ENCODE measurements at regions of chr19 and their contacts with region 1.

Region 1: DNA sequence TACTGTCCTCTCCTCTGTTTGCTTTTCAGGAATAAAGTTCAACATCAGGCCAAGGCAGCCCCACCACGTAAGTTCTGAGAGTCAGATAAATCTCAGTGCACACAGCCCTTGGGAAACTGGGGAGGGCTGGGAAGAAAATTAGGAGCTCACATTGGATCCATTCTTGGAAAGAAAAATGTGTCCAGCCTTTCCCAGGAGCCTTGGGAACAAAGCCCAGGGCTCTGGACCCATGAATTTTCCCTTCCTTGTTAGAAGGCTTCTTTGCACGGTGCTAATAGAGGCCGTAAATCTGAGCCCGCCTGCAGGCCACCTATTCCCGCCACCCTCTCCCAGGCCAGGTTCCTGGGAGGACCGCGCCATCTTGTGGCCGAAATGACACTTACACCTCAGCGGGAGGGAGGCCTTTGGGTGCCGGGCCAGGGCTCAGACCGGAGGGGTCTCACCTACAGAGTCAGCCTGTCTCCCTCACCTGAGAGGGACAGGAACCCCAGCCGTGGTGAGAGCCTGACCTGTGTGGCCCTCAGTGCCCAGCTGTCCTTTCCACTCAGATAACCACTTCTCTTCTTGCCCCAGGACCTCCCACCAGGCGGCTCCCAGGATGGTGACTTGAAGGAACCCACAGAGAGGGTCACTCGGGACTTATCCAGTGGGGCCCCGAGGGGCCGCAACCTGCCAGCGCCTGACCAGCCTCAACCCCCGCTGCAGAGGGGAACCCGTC is 25.1 kb upstream of the KCTD15 start:
- DNase-seq: no peak
- H3K4me3 ChIP-seq: no peak overlapping the region
- CTCF ChIP-seq: peak; percentile 91

Region 2: DNA sequence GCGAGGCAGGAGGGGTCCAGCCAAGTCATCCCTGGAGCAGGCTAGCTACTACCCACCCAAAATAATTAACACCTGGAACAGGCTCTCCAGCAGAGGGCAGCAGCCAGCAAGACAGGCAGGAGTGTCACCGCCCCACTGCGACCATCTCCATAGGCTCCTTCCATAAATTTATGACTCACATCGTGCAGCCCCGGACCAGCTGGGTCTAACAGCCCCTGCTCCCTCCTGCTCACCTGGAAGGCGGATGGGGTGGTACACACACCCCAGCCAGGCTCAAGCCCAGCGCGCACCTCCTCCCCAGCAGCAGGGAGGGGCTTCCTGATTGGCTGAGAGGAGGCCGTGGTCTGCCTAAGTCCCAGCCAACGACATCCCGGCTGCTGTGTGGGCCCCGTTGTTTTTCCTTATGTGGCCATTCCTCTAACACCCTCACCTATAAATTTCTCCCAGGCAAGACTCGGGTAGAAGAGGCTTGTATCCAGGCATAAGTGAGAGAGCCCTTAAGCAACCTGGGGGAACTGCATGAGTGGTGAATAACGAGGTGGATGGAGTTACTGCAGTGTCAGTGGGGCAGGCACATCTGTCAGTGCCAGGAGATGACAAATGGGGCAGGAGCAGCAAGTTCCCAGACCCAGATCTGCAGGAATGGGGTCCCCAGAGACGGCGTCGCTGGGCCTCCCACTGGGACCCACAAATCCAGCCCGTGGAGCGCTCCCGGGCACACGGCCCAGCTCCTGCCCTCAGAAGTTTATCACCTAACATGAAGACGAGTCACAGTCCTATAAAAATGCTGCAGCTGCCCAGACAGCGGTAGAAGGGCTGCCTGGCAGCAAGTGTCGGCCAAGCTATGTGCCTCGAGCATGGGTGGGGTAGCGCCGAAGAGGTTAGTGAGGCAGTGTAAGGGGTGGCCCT is 355.0 kb before region 1 on chr19:
- CTCF ChIA-PET with region 1: interaction called, 170 read pairs
- POLR2A ChIA-PET with region 1: no interaction called
- DNase-seq: no peak
- H3K4me3 ChIP-seq: peak overlapping the region; percentile 12; the same call in 1 of the 2 replicates
- CTCF ChIP-seq: peak; percentile 74

Region 3: GRCh38 chr19:33430674-33431277 is 340.8 kb before region 1 on chr19:
- CTCF ChIA-PET with region 1: interaction called, 311 read pairs
- POLR2A ChIA-PET with region 1: no interaction called
- DNase-seq: no peak
- H3K4me3 ChIP-seq: no peak overlapping the region
- CTCF ChIP-seq: peak; percentile 97

Region 4: DNA sequence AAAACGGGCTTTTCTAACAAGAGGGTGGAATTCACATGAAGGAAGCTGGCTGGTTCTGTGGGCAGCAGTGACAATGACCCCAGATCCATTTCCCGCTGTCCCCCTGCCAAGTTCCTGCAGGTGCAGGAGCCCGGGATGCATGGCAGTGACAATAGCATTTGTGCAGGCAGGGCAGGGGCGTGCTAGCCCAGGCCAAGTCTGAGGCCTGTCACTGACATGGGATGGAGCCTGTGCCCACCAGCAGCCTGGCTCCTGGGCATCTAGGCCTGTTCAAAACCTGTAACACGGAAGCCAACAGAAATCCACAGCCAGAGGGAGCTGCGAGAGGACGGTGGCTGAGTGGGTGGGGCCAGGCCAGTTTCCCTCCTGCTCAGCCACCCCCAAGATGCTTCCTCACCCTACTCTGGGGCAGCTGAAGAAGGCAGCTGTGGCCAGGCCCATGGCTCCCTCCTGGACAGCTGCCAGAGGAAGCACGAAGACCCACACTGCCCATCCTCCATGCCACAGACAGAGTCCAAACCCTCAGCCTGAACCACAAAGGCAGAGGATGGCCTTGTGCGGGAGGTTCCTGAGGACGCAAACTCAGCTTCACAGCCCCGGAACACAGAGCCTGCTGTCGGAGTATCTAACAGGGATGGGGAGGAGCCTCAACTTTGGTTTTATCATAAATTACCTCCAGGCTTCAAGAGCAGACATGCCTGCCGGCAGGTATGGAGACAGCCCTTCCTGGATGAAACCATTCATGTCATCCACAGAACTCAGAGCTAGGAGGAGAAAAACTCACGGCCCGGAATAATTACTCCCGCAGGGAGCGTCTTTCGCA is 324.0 kb before region 1 on chr19:
- CTCF ChIA-PET with region 1: interaction called, 14 read pairs
- POLR2A ChIA-PET with region 1: no interaction called
- DNase-seq: no peak
- H3K4me3 ChIP-seq: no peak overlapping the region
- CTCF ChIP-seq: no peak

Region 5: GRCh38 chr19:33758541-33759013 is 13.0 kb before region 1 on chr19:
- CTCF ChIA-PET with region 1: interaction called, 22 read pairs
- POLR2A ChIA-PET with region 1: no interaction called
- DNase-seq: no peak
- H3K4me3 ChIP-seq: no peak overlapping the region
- CTCF ChIP-seq: no peak

Region 6: GRCh38 chr19:33804021-33804799 is 32.7 kb after region 1 on chr19:
- CTCF ChIA-PET with region 1: no interaction called
- POLR2A ChIA-PET with region 1: no interaction called
- DNase-seq: no peak
- H3K4me3 ChIP-seq: no peak overlapping the region
- CTCF ChIP-seq: no peak

Region 7: GRCh38 chr19:33864311-33864850 is 92.8 kb after region 1 on chr19:
- CTCF ChIA-PET with region 1: no interaction called
- POLR2A ChIA-PET with region 1: no interaction called
- DNase-seq: no peak
- H3K4me3 ChIP-seq: no peak overlapping the region
- CTCF ChIP-seq: no peak